ENCODE measurements at regions of chr4 and their contacts with region 1.

Region 1: GRCh38 chr4:88284439-88285234 is at the start of gene PPM1K:
- DNase-seq: peak; percentile 98 to 100 (median 99)
- ATAC-seq: peak; percentile 92
- H3K4me3 ChIP-seq: peak within 1 kb of the TSS; percentile 87
- H3K4me3 Mint-ChIP-seq: peak within 1 kb of the TSS; percentile 90 to 99 (median 97)
- H3K27ac ChIP-seq: peak within 1 kb of the TSS; percentile 96
- H3K27ac Mint-ChIP-seq: peak within 1 kb of the TSS; percentile 92 to 100 (median 99)
- H3K4me1 ChIP-seq: peaks cover 21 to 30% of the 10 kb centered on the region in 2 donors
- H3K4me1 Mint-ChIP-seq: peaks cover 32 to 52% (median 47%) of the 10 kb centered on the region in 7 donors
- H3K27me3 ChIP-seq: no peaks in the 10 kb centered on the region
- H3K27me3 Mint-ChIP-seq: no peaks in the 10 kb centered on the region
- total RNA-seq, gene PPM1K: 72.1 to 92.7 (median 91.9) TPM

Region 2: DNA sequence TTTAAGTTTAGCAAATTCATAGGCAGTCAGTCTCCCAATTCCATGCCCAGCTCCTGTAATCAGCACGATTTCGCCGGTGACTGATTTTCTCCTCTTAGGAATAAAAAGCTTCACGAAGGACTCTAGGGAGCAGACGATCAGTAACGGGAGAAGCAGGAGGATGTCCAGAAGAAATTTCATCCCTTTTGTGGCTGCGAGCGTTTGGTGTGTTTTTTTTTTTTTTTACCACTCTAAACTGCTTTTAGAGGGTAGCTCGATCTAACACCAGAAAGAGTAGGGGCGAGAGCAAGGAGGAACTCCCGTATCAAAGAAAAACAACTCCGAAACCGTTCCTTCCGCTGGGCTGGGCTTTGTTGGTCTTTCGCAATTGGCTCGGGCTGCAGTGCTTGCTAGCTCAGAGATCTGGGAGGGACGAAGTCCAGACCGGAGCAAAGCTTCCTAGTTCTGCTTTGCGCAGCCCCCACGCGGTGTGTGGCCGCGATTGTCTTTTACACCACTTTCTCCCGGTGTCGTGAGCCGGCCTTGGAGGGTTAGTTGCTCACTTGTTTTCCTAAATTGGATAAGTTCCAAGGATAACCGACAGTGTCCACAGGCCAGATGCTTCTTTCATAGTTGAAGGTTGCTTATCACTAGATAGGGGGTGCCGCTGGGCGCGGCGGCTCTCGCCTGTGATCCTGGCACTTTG is 893.6 kb before region 1 on chr4 and contains the start of gene HSD17B11:
- CTCF ChIA-PET with region 1: no interaction called
- POLR2A ChIA-PET with region 1: interaction called, 5 read pairs
- intact Hi-C with region 1: loop called in 1 of 2 experiments (anchors 10 kb)
- DNase-seq: peak; percentile 44 to 83 (median 79)
- ATAC-seq: peak; percentile 99
- H3K4me3 ChIP-seq: peak within 1 kb of the TSS; percentile 85
- H3K4me3 Mint-ChIP-seq: peak within 1 kb of the TSS; percentile 87 to 99 (median 97)
- H3K27ac ChIP-seq: peak within 1 kb of the TSS; percentile 82
- H3K27ac Mint-ChIP-seq: peak within 1 kb of the TSS; percentile 83 to 96 (median 94)
- H3K4me1 ChIP-seq: peaks cover 10 to 17% of the 10 kb centered on the region in 2 donors
- H3K4me1 Mint-ChIP-seq: peaks cover 32 to 66% (median 57%) of the 10 kb centered on the region in 7 donors
- H3K27me3 ChIP-seq: no peaks in the 10 kb centered on the region
- H3K27me3 Mint-ChIP-seq: peaks cover 0 to 14% (median 0%) of the 10 kb centered on the region in 5 donors
- total RNA-seq, gene HSD17B11: 34.3 to 74.4 (median 61.0) TPM

Region 3: GRCh38 chr4:88070031-88070430 is 214.6 kb before region 1 on chr4:
- CTCF ChIA-PET with region 1: no interaction called
- POLR2A ChIA-PET with region 1: no interaction called
- intact Hi-C with region 1: no loop called
- DNase-seq: no peak
- ATAC-seq: no peak
- H3K4me3 ChIP-seq: no peak overlapping the region
- H3K4me3 Mint-ChIP-seq: no peak overlapping the region
- H3K27ac ChIP-seq: no peak overlapping the region
- H3K27ac Mint-ChIP-seq: no peak overlapping the region
- H3K4me1 ChIP-seq: no peaks in the 10 kb centered on the region
- H3K4me1 Mint-ChIP-seq: peaks cover 0 to 5% (median 0%) of the 10 kb centered on the region in 7 donors
- H3K27me3 ChIP-seq: no peaks in the 10 kb centered on the region
- H3K27me3 Mint-ChIP-seq: no peaks in the 10 kb centered on the region

Region 4: DNA sequence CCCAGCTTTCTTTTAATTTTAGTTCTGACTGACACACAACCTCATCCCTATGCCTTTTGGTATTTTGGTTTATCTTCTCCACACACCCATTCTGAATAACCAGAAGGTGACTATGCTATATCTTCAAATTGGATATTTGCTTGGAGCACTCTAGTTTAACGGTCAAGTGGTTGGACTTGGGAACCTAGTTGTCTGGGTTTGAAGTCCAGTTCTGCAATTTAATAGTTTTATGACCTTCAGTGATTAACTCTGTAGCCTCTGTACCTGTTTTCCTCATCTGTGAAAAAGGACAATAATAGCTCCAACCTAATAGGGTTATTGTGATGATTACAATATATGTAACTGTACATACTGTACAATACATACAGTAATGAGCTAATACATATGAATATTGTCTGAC is 20.3 kb before region 1 on chr4:
- CTCF ChIA-PET with region 1: no interaction called
- POLR2A ChIA-PET with region 1: interaction called, 19 read pairs
- intact Hi-C with region 1: loop called in 1 of 2 experiments (anchors 1 kb)
- DNase-seq: no peak
- ATAC-seq: no peak
- H3K4me3 ChIP-seq: no peak overlapping the region
- H3K4me3 Mint-ChIP-seq: no peak overlapping the region
- H3K27ac ChIP-seq: no peak overlapping the region
- H3K27ac Mint-ChIP-seq: no peak overlapping the region
- H3K4me1 ChIP-seq: no peaks in the 10 kb centered on the region
- H3K4me1 Mint-ChIP-seq: peaks cover 0 to 4% (median 0%) of the 10 kb centered on the region in 7 donors
- H3K27me3 ChIP-seq: no peaks in the 10 kb centered on the region
- H3K27me3 Mint-ChIP-seq: no peaks in the 10 kb centered on the region

Region 5: GRCh38 chr4:88378691-88379559 is 94.3 kb after region 1 on chr4 and contains the start of gene HERC6:
- CTCF ChIA-PET with region 1: interaction called, 9 read pairs
- POLR2A ChIA-PET with region 1: interaction called, 36 read pairs
- intact Hi-C with region 1: loop called (anchors 1 kb)
- DNase-seq: peak; percentile 49 to 77 (median 70)
- ATAC-seq: peak; percentile 80
- H3K4me3 ChIP-seq: peak within 1 kb of the TSS; percentile 95
- H3K4me3 Mint-ChIP-seq: peak within 1 kb of the TSS; percentile 88 to 98 (median 94)
- H3K27ac ChIP-seq: peak within 1 kb of the TSS; percentile 92
- H3K27ac Mint-ChIP-seq: peak within 1 kb of the TSS; percentile 91 to 99 (median 94)
- H3K4me1 ChIP-seq: peaks cover 21 to 27% of the 10 kb centered on the region in 2 donors
- H3K4me1 Mint-ChIP-seq: peaks cover 24 to 60% (median 46%) of the 10 kb centered on the region in 7 donors
- H3K27me3 ChIP-seq: no peaks in the 10 kb centered on the region
- H3K27me3 Mint-ChIP-seq: no peaks in the 10 kb centered on the region
- total RNA-seq, gene HERC6: 12.6 to 43.5 (median 23.0) TPM

Region 6: GRCh38 chr4:88591787-88592599 is 307.4 kb after region 1 on chr4 and contains the start of gene HERC3:
- CTCF ChIA-PET with region 1: no interaction called
- POLR2A ChIA-PET with region 1: interaction called, 5 read pairs
- intact Hi-C with region 1: loop called (anchors 1 kb)
- DNase-seq: peak; percentile 87 to 92 (median 91)
- ATAC-seq: peak; percentile 94
- H3K4me3 ChIP-seq: peak within 1 kb of the TSS; percentile 60
- H3K4me3 Mint-ChIP-seq: peak within 1 kb of the TSS; percentile 94 to 100 (median 98)
- H3K27ac ChIP-seq: peak within 1 kb of the TSS; percentile 93
- H3K27ac Mint-ChIP-seq: peak within 1 kb of the TSS; percentile 83 to 99 (median 97)
- H3K4me1 ChIP-seq: peaks cover 10 to 20% of the 10 kb centered on the region in 2 donors
- H3K4me1 Mint-ChIP-seq: peaks cover 34 to 58% (median 49%) of the 10 kb centered on the region in 7 donors
- H3K27me3 ChIP-seq: no peaks in the 10 kb centered on the region
- H3K27me3 Mint-ChIP-seq: peaks cover 0 to 31% (median 0%) of the 10 kb centered on the region in 5 donors
- total RNA-seq, gene HERC3: 38.1 to 130 (median 104) TPM

Region 7: DNA sequence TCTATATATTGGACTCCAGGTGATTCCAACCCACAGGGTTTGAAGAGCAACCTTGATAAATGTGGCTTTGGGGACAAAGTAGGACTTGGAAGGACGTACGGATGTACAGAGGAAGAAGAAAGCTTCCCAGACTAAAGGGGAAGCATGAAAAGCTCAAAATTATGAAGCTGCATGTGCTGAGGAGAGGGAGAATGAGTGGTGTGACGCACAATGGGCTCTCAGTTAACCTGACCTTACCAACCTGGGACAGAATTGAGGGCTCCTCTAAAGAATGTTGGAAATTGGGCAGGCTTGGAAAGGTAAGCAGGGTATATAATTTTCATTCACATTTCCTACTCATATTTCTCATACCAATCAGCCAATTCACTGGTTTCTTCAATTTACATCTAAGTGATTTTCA is 816.2 kb after region 1 on chr4:
- CTCF ChIA-PET with region 1: no interaction called
- POLR2A ChIA-PET with region 1: no interaction called
- intact Hi-C with region 1: no loop called
- DNase-seq: no peak
- ATAC-seq: no peak
- H3K4me3 ChIP-seq: no peak overlapping the region
- H3K4me3 Mint-ChIP-seq: no peak overlapping the region
- H3K27ac ChIP-seq: no peak overlapping the region
- H3K27ac Mint-ChIP-seq: no peak overlapping the region
- H3K4me1 ChIP-seq: no peaks in the 10 kb centered on the region
- H3K4me1 Mint-ChIP-seq: peaks cover 0 to 10% (median 5%) of the 10 kb centered on the region in 7 donors
- H3K27me3 ChIP-seq: no peaks in the 10 kb centered on the region
- H3K27me3 Mint-ChIP-seq: peaks cover 0 to 5% (median 4%) of the 10 kb centered on the region in 5 donors

Region 8: GRCh38 chr4:89110986-89111832 is 826.6 kb after region 1 on chr4 and contains the start of gene TIGD2:
- CTCF ChIA-PET with region 1: no interaction called
- POLR2A ChIA-PET with region 1: no interaction called
- intact Hi-C with region 1: loop called (anchors 2 kb)
- DNase-seq: peak; percentile 81 to 90 (median 87)
- ATAC-seq: peak; percentile 97
- H3K4me3 ChIP-seq: peak within 1 kb of the TSS; percentile 80
- H3K4me3 Mint-ChIP-seq: peak within 1 kb of the TSS; percentile 84 to 93 (median 90)
- H3K27ac ChIP-seq: peak within 1 kb of the TSS; percentile 81
- H3K27ac Mint-ChIP-seq: peak within 1 kb of the TSS; percentile 80 to 94 (median 89)
- H3K4me1 ChIP-seq: peaks cover 10 to 15% of the 10 kb centered on the region in 2 donors
- H3K4me1 Mint-ChIP-seq: peaks cover 20 to 28% (median 24%) of the 10 kb centered on the region in 7 donors
- H3K27me3 ChIP-seq: no peaks in the 10 kb centered on the region
- H3K27me3 Mint-ChIP-seq: peaks cover 0 to 25% (median 0%) of the 10 kb centered on the region in 5 donors
- total RNA-seq, gene TIGD2: 3.0 to 7.9 (median 5.2) TPM